Spleen (tissue), 13 donors: ENCODE measurements at regions of chr11 and their contacts with region 1.

Region 1: GRCh38 chr11:32960553-32961164 is 55.0 kb upstream of the DEPDC7 start:
- DNase-seq: no peak
- H3K4me3 ChIP-seq: no peak overlapping the region
- H3K27ac ChIP-seq: no peak overlapping the region
- H3K4me1 ChIP-seq: no peaks in the 10 kb centered on the region
- H3K27me3 ChIP-seq: no peaks in the 10 kb centered on the region
- CTCF ChIP-seq: peak; percentile 40 to 78 (median 67)
- POLR2A ChIP-seq: no peak

Region 2: GRCh38 chr11:33045551-33046255 is 85.0 kb after region 1 on chr11:
- intact Hi-C with region 1: no loop called
- DNase-seq: no peak
- H3K4me3 ChIP-seq: no peak overlapping the region
- H3K27ac ChIP-seq: no peak overlapping the region
- H3K4me1 ChIP-seq: peaks cover 4 to 55% (median 10%) of the 10 kb centered on the region in 6 donors
- H3K27me3 ChIP-seq: no peaks in the 10 kb centered on the region
- CTCF ChIP-seq: no peak
- POLR2A ChIP-seq: no peak

Region 3: GRCh38 chr11:33065445-33066178 is 105.0 kb after region 1 on chr11:
- intact Hi-C with region 1: loop called (anchors 5 kb)
- DNase-seq: peak; percentile 91
- H3K4me3 ChIP-seq: no peak overlapping the region
- H3K27ac ChIP-seq: no peak overlapping the region
- H3K4me1 ChIP-seq: peaks cover 12 to 33% (median 23%) of the 10 kb centered on the region in 6 donors
- H3K27me3 ChIP-seq: no peaks in the 10 kb centered on the region
- CTCF ChIP-seq: peak; percentile 69 to 91 (median 85)
- POLR2A ChIP-seq: no peak

Region 4: DNA sequence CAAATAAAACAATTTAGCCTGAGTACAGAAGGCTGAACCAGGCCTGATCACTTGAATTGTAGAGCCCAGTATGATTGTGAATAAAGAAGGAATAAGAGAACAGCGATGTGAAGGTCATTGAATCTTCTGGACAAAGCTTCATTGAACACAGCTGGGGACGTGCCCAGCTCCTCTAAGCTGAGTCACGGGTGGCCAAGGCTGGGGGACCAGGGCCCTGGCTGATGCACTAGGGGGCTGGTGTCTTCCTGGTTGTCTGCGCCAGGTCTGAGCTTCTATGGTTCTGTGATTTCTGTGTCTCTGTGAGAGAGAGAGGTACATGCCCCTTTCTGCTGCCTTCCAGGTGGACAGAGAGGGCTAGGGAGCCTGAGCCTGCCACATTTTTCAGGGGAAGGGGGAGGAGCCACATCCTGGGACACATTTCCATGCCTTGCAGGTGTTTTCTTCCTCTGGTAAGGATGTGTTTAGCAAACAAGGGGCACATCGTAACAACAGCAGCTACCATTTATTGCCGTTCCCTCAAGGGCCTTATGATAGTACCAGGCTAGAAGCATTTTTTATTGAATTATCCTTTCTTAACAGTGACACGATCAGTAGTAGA is 604.3 kb after region 1 on chr11:
- intact Hi-C with region 1: no loop called
- DNase-seq: no peak
- H3K4me3 ChIP-seq: no peak overlapping the region
- H3K27ac ChIP-seq: no peak overlapping the region
- H3K4me1 ChIP-seq: no peaks in the 10 kb centered on the region
- H3K27me3 ChIP-seq: peaks cover 0 to 29% (median 0%) of the 10 kb centered on the region in 7 donors
- CTCF ChIP-seq: no peak
- POLR2A ChIP-seq: no peak